ENCODE measurements at regions of chr15 and their contacts with region 1.

Region 1: GRCh38 chr15:79596051-79596507 is 163.9 kb downstream of the MINAR1 start:
- DNase-seq: peak; percentile 94
- ATAC-seq: peak; percentile 97
- H3K4me3 ChIP-seq: no peak overlapping the region
- H3K27ac ChIP-seq: no peak overlapping the region
- H3K4me1 ChIP-seq: no peaks in the 10 kb centered on the region
- H3K27me3 ChIP-seq: no peaks in the 10 kb centered on the region; a peak in 1 of 5 replicates
- CTCF ChIP-seq: peak; percentile 96
- EP300 ChIP-seq: no peak
- POLR2A ChIP-seq: no peak
- RAD21 ChIP-seq: peak; percentile 84

Region 2: DNA sequence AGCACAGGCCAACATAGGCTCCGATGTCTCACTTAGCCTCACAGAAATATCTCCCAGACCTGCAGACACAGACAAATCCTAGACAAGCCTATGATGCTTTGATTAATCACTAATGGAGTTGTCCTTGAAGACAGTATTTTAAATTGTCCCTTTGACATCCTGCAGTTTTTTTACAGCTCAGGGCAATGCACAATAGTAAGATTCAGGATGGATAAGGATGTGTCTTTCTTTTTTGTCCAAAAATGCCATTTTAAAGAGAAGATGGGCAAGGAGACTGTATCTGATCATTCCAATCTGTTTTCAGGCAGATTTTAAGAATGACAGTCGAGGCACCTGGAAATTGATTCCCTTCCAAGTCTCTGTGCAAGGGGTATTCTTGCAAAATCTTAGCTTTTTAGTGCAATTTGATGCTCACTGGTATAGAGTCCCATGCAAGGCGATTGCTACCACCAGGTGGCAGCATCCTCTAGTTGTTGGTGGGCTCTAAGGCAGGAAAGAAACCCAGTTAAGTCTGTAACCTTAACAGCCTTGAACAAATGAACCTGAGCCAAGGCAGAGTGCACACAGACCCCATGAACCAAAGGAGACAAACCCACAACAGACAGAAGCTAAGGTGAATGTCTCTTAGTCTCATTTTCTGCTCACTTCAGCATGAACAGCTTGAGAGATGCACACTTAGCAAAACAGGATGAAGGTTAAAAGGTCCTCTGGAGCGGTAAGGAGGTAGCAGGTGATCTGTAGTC is 215.2 kb before region 1 on chr15:
- CTCF ChIA-PET with region 1: interaction called, 62 read pairs
- POLR2A ChIA-PET with region 1: interaction called, 3 read pairs
- in situ Hi-C with region 1: loop called (anchors 5 kb)
- intact Hi-C with region 1: loop called (anchors 1 kb)
- DNase-seq: peak; percentile 63
- ATAC-seq: peak; percentile 99
- H3K4me3 ChIP-seq: no peak overlapping the region
- H3K27ac ChIP-seq: no peak overlapping the region
- H3K4me1 ChIP-seq: peaks cover 14% of the 10 kb centered on the region
- H3K27me3 ChIP-seq: no peaks in the 10 kb centered on the region; a peak in 1 of 5 replicates
- CTCF ChIP-seq: peak; percentile 86
- EP300 ChIP-seq: no peak
- POLR2A ChIP-seq: no peak
- RAD21 ChIP-seq: peak; percentile 62; the same call in 1 of the 2 replicates

Region 3: GRCh38 chr15:79450648-79451047 is 145.4 kb before region 1 on chr15:
- CTCF ChIA-PET with region 1: interaction called, 11 read pairs
- POLR2A ChIA-PET with region 1: no interaction called
- in situ Hi-C with region 1: no loop called
- intact Hi-C with region 1: no loop called
- DNase-seq: peak; percentile 5
- ATAC-seq: peak; percentile 53; the same call in 2 of the 3 replicates
- H3K4me3 ChIP-seq: no peak overlapping the region
- H3K27ac ChIP-seq: no peak overlapping the region
- H3K4me1 ChIP-seq: no peaks in the 10 kb centered on the region
- H3K27me3 ChIP-seq: peaks cover 2 to 6% of the 10 kb centered on the region in 2 experiments; a peak in 2 of 5 replicates
- CTCF ChIP-seq: peak; percentile 38
- EP300 ChIP-seq: no peak
- POLR2A ChIP-seq: no peak
- RAD21 ChIP-seq: no peak